Calu3 (cell line): ENCODE measurements at regions of chr1 and their contacts with region 1.

Region 1: DNA sequence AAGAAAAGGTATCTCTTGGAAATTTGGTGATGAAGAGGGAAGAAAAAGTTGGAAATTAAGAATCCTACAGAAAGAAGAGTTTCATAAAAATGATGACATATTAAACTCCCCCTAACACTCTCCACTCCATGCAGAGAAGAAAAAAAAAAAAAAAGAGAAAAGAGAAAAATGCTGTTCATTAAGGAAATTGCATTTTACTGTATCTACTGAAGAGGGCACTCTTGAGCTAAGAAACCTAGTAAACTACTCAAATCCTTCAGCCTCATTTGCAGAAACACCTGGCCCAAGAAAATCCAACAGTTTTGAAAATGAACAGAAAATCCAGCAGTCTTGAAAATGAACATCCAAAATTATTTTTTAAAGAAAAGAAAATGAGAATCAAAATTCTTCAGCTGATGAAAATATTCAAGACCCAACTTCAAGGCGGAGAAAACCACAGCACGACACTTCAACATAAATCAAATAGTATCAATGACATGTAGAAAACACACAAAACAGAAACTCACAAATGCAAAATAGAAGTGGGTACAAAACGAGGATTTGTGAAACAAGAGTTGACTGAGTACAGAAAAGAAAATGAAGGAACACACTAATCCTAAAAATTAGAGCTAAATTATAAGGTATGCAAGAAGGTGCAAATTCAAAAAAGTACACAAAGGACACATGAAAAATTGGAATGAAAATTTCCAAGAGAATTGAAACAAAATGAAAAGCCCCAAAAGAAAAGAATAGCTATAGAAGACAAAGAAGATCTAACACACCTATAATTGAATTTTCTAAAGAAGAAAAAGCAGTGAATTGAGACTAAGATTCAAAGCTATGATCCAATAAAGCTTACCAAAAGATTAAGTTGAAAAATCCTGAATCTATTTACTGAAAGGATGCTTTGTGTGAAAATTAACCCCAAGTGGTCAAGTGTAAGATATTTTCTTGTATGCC is 73.2 kb upstream of the DNAJC6 start:
- DNase-seq: no peak
- H3K4me3 Mint-ChIP-seq: no peak overlapping the region
- H3K27ac Mint-ChIP-seq: no peak overlapping the region
- H3K4me1 Mint-ChIP-seq: peaks cover 3% of the 10 kb centered on the region
- H3K27me3 Mint-ChIP-seq: no peaks in the 10 kb centered on the region
- CTCF ChIP-seq: peak; percentile 57

Region 2: GRCh38 chr1:65265651-65266351 is 29.7 kb after region 1 on chr1:
- CTCF ChIA-PET with region 1: interaction called, 5 read pairs
- intact Hi-C with region 1: loop called (anchors 1 kb)
- DNase-seq: peak; percentile 67
- H3K4me3 Mint-ChIP-seq: peak overlapping the region; percentile 82
- H3K27ac Mint-ChIP-seq: peak overlapping the region; percentile 87
- H3K4me1 Mint-ChIP-seq: peaks cover 12% of the 10 kb centered on the region
- H3K27me3 Mint-ChIP-seq: no peaks in the 10 kb centered on the region
- CTCF ChIP-seq: no peak

Region 3: GRCh38 chr1:65362545-65362944 is 126.4 kb after region 1 on chr1:
- CTCF ChIA-PET with region 1: no interaction called
- intact Hi-C with region 1: no loop called
- DNase-seq: peak; percentile 23
- H3K4me3 Mint-ChIP-seq: no peak overlapping the region
- H3K27ac Mint-ChIP-seq: no peak overlapping the region
- H3K4me1 Mint-ChIP-seq: peaks cover 12% of the 10 kb centered on the region
- H3K27me3 Mint-ChIP-seq: no peaks in the 10 kb centered on the region
- CTCF ChIP-seq: no peak

Region 4: GRCh38 chr1:65431111-65431705 is 195.1 kb after region 1 on chr1:
- CTCF ChIA-PET with region 1: interaction called, 3 read pairs
- intact Hi-C with region 1: loop called (anchors 1 kb)
- DNase-seq: no peak
- H3K4me3 Mint-ChIP-seq: no peak overlapping the region
- H3K27ac Mint-ChIP-seq: no peak overlapping the region
- H3K4me1 Mint-ChIP-seq: peaks cover 30% of the 10 kb centered on the region
- H3K27me3 Mint-ChIP-seq: no peaks in the 10 kb centered on the region
- CTCF ChIP-seq: no peak

Region 5: DNA sequence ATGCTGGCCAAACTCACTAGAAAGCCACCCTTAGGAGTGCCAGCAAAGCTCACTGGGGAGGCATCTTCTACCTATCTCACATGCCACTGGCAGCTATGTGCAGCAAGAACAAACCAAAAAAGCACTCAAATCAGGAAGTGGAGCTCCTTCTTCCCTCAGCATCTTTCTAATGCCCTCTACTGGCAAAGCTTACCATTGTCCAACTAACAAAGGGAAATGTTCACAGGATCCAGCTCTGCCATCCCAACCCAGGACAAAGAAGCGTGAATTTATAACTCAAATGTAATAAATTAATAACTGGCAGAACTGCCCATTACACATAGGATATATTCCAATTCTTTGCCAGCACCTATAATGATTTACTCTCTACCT is 223.2 kb after region 1 on chr1:
- CTCF ChIA-PET with region 1: interaction called, 13 read pairs
- intact Hi-C with region 1: loop called (anchors 2 kb)
- DNase-seq: peak; percentile 9
- H3K4me3 Mint-ChIP-seq: no peak overlapping the region
- H3K27ac Mint-ChIP-seq: no peak overlapping the region
- H3K4me1 Mint-ChIP-seq: peaks cover 7% of the 10 kb centered on the region
- H3K27me3 Mint-ChIP-seq: no peaks in the 10 kb centered on the region
- CTCF ChIP-seq: no peak

Region 6: GRCh38 chr1:65687428-65688214 is 451.5 kb after region 1 on chr1:
- CTCF ChIA-PET with region 1: interaction called, 28 read pairs
- intact Hi-C with region 1: loop called (anchors 1 kb)
- DNase-seq: peak; percentile 90
- H3K4me3 Mint-ChIP-seq: no peak overlapping the region
- H3K27ac Mint-ChIP-seq: no peak overlapping the region
- H3K4me1 Mint-ChIP-seq: no peaks in the 10 kb centered on the region
- H3K27me3 Mint-ChIP-seq: peaks cover 25% of the 10 kb centered on the region
- CTCF ChIP-seq: peak; percentile 95

Region 7: GRCh38 chr1:65958561-65959350 is 722.6 kb after region 1 on chr1:
- CTCF ChIA-PET with region 1: interaction called, 5 read pairs
- intact Hi-C with region 1: loop called (anchors 10 kb)
- DNase-seq: peak; percentile 30
- H3K4me3 Mint-ChIP-seq: no peak overlapping the region
- H3K27ac Mint-ChIP-seq: no peak overlapping the region
- H3K4me1 Mint-ChIP-seq: peaks cover 23% of the 10 kb centered on the region
- H3K27me3 Mint-ChIP-seq: no peaks in the 10 kb centered on the region
- CTCF ChIP-seq: peak; percentile 75

Region 8: DNA sequence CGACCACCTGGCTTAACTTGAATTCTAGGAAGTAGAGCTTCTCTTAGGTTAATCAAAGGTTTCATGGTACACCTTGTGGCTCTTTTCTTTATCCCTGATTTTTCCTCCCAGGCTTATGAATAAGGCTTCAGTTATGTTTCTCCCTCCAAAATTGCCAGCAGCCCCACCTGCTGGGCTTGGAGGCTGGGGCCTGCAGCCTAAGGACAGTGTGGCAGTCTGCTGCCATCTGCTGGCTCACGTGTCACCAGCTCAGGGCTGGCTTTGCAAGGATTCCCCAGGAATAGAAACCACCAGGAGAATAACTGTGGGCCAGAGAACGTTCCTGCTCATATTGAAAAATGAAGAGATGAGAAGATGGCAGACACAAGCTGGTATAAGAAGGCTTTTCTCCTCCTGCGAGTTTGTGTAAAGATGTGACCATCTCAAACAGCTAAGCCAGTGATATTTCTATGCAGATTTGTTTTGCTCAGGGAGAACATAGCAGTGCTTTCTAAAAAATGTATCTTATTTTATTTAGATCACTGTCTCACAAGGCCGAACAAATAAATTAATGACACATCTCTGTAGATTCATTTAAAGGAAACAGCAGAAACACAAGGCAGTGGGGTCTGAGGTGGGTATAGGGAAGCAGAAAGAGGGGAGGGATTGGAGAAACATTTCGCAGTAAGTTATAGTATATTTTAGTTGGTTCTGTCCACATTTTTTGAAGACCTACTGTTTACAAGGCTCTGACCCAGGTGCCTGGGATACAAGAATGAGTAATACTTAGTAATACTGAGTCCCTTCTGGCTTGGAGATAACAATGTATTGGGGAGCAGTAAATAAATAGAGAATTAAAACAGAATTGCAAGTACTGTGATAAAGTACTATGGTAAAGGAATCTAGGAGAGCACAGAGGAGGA is 1006.8 kb after region 1 on chr1:
- CTCF ChIA-PET with region 1: no interaction called
- intact Hi-C with region 1: loop called (anchors 10 kb)
- DNase-seq: peak; percentile 86
- H3K4me3 Mint-ChIP-seq: no peak overlapping the region
- H3K27ac Mint-ChIP-seq: no peak overlapping the region
- H3K4me1 Mint-ChIP-seq: peaks cover 8% of the 10 kb centered on the region
- H3K27me3 Mint-ChIP-seq: no peaks in the 10 kb centered on the region
- CTCF ChIP-seq: peak; percentile 96